ENCODE measurements at regions of chr1 and their contacts with region 1.

Region 1: DNA sequence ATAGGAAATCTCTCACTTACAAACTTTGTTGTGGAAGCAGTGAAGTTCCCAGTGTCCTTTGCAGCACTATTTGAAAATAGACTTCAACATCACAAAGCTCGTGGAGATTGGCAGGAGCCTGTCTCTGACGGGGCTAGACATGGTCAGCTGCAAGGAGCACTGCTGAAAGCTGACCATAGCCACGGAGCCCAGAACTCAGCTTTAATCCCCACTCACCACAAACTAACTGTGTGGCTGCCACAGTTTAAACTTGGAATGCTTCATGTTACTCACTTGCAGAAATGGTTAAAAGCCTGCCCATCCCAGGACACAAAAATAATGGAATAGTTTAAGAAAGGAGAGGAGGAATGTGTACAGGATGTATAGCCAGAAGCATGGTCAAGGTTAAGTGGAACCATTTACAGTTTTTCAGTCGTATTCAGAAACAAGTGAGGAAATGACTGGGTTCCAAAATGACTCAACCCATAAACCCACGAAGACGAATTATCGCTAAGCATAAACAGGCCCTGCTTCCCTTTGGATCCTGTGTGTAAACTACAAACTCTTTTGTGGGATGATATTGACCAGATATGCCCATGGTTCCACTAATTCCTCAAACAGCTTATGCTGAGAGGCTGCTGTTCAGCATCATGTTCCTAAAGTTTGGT is 18.2 kb downstream of the DNALI1 start:
- DNase-seq: peak; percentile 17
- H3K4me3 Mint-ChIP-seq: no peak overlapping the region
- H3K27ac Mint-ChIP-seq: peak overlapping the region; percentile 76
- H3K4me1 Mint-ChIP-seq: peaks cover 61% of the 10 kb centered on the region
- H3K27me3 Mint-ChIP-seq: no peaks in the 10 kb centered on the region

Region 2: GRCh38 chr1:37493336-37494098 is 81.4 kb before region 1 on chr1:
- CTCF ChIA-PET with region 1: no interaction called
- POLR2A ChIA-PET with region 1: interaction called, 3 read pairs
- intact Hi-C with region 1: loop called (anchors 2 kb)
- DNase-seq: peak; percentile 54
- H3K4me3 Mint-ChIP-seq: peak overlapping the region; percentile 2
- H3K27ac Mint-ChIP-seq: peak overlapping the region; percentile 81
- H3K4me1 Mint-ChIP-seq: peaks cover 30% of the 10 kb centered on the region
- H3K27me3 Mint-ChIP-seq: no peaks in the 10 kb centered on the region

Region 3: DNA sequence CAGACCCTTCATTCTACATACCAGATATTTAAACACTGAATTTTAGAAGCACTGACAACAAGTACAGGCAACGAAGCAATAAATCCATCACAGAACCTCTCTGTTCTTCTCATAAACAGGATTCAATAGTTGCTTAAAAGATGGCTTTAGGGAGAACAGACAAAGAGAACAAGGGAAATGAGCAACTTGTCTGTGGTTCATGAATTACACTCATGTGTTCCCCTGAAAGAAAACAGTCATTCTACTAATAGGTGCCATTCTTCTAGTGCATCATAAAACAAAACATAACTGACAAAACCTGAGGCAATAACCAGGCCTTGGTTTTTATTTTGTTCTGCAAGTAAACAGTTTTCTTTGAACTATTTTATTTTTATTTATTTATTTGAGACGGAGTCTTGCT is 14.0 kb after region 1 on chr1:
- CTCF ChIA-PET with region 1: interaction called, 3 read pairs
- POLR2A ChIA-PET with region 1: interaction called, 4 read pairs
- intact Hi-C with region 1: loop called (anchors 1 kb)
- DNase-seq: no peak
- H3K4me3 Mint-ChIP-seq: no peak overlapping the region
- H3K27ac Mint-ChIP-seq: peak overlapping the region; percentile 49
- H3K4me1 Mint-ChIP-seq: peaks cover 31% of the 10 kb centered on the region
- H3K27me3 Mint-ChIP-seq: no peaks in the 10 kb centered on the region

Region 4: DNA sequence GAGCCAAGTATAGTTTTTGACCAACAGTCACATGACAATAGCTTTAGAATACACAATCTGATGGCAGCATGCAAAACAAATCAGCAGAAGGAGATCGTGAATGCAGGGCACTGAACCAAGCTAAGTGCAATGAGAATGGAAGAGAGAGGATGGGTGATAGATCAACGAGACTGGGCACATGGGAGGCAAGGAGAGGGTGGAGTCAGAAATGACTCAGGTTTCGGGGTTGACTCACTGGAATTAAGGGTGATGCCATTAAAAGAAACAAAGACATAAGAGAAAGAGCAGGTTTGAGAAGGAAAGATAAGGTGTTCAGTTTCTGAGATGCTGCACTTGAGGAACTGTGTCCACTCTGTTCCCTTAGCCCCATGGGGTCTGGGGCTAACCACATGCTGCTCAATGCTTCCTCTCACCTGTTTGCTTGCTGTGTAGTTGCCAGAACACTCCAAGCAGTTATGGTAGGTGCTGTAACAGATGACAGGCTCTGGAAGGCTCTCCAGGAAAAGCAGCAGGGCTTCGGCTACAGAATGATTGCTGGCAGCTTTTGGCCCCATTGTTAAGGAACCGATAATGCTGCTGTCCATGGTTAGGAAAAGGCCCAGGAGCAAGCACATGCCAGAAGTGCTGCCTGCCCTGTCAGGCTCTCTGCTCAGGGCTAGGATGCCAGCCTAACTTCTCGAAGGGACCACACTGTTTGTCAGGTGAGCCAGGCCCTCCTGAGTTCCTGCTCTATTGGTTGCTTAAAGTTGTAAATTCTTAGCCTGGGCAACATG is 290.6 kb after region 1 on chr1:
- CTCF ChIA-PET with region 1: no interaction called
- POLR2A ChIA-PET with region 1: no interaction called
- intact Hi-C with region 1: loop called (anchors 5 kb)
- DNase-seq: peak; percentile 71
- H3K4me3 Mint-ChIP-seq: no peak overlapping the region
- H3K27ac Mint-ChIP-seq: peak overlapping the region; percentile 67
- H3K4me1 Mint-ChIP-seq: peaks cover 15% of the 10 kb centered on the region
- H3K27me3 Mint-ChIP-seq: no peaks in the 10 kb centered on the region

Measured in activated CD4-positive, alpha-beta memory T cell treated with anti-CD3 and anti-CD28 coated beads for 36 hours (primary cell).